MCF 10A (cell line): ENCODE measurements at regions of chr12 and their contacts with region 1.

Region 1: DNA sequence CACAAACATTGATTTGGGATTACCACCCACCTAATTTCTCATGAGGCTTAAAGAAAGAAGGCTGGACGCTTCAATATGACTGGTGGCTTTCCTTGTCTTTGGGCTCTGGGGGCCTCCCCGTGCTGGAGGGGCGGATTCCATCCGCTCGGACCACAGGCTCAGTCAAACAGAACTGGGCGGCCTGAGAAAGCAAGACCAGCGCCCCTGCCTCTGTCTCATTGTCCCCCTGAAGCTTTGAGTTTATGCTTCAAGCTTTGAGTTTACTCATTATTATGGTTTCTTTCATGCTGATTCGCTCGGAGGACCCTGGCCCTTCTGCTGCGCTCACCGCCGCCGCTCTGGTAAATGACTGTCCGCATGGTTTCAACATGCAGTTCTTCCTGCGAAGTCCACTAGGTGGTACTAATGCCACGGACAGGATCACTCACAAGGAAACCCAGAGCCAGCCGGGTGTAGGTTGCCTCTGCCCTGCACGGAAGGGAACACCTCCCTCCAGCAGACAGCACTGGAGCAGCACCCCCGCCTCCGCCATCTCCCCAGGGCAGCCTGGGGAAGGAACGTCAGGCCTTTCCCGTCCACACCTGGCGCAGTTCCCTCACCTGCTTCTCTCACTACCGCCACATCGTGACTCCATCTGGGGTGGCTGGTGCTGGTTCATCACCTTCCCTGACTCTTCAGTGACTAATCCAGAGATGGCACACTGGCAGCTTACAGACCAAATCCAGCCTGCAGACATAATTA is 13.2 kb upstream of the TIGAR start:
- DNase-seq: peak; percentile 88
- H3K4me3 Mint-ChIP-seq: peak overlapping the region; percentile 60
- H3K27ac Mint-ChIP-seq: peak overlapping the region; percentile 36
- H3K4me1 Mint-ChIP-seq: peaks cover 10% of the 10 kb centered on the region
- H3K27me3 Mint-ChIP-seq: peaks cover 12% of the 10 kb centered on the region
- CTCF ChIP-seq: peak; percentile 78

Region 2: DNA sequence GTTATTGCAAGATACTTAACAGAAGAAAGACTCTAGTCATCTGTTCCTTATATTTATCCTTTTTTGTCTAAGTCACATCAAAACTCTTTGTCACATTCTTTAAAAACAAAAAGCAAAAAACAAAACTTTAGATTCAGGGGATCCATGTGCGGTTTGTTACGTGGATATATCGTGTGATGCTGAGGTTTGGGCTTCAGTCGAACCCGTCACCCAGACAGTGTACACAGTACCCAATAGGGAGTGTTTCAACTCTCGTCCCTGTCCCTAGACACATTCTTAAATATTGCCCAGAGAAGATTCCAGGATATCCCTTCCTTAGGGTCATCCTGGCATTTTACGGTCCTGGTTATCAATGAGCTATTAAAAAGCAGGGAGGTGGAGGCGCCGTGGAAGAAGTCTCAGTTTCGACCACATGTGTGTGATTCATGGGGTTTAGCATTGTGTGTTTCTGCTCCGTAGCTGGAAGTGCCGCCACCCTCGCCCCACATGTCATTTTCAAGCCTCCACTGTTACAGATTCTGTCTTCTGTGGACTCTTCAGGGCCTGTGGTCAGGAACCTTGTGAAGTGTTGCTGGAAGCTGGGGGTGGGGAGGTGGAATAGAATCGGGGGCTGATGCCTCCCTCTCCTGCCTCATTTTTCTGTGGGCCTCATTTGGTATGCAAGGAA is 14.3 kb before region 1 on chr12:
- CTCF ChIA-PET with region 1: interaction called, 11 read pairs
- POLR2A ChIA-PET with region 1: interaction called, 3 read pairs
- intact Hi-C with region 1: no loop called
- DNase-seq: no peak
- H3K4me3 Mint-ChIP-seq: no peak overlapping the region
- H3K27ac Mint-ChIP-seq: no peak overlapping the region
- H3K4me1 Mint-ChIP-seq: no peaks in the 10 kb centered on the region
- H3K27me3 Mint-ChIP-seq: no peaks in the 10 kb centered on the region
- CTCF ChIP-seq: no peak

Region 3: GRCh38 chr12:4320853-4321701 is 13.3 kb after region 1 on chr12 and contains the start of gene TIGAR:
- CTCF ChIA-PET with region 1: interaction called, 24 read pairs
- POLR2A ChIA-PET with region 1: interaction called, 4 read pairs
- intact Hi-C with region 1: no loop called
- DNase-seq: peak; percentile 94
- H3K4me3 Mint-ChIP-seq: peak within 1 kb of the TSS; percentile 98
- H3K27ac Mint-ChIP-seq: peak within 1 kb of the TSS; percentile 84
- H3K4me1 Mint-ChIP-seq: peaks cover 19% of the 10 kb centered on the region
- H3K27me3 Mint-ChIP-seq: no peaks in the 10 kb centered on the region
- CTCF ChIP-seq: no peak
- total RNA-seq, gene TIGAR: 44.0 and 45.8 TPM in 2 replicates

Region 4: GRCh38 chr12:4526923-4527546 is 219.3 kb after region 1 on chr12:
- CTCF ChIA-PET with region 1: interaction called, 6 read pairs
- POLR2A ChIA-PET with region 1: no interaction called
- intact Hi-C with region 1: loop called (anchors 2 kb)
- DNase-seq: peak; percentile 16
- H3K4me3 Mint-ChIP-seq: no peak overlapping the region
- H3K27ac Mint-ChIP-seq: no peak overlapping the region
- H3K4me1 Mint-ChIP-seq: no peaks in the 10 kb centered on the region
- H3K27me3 Mint-ChIP-seq: no peaks in the 10 kb centered on the region
- CTCF ChIP-seq: peak; percentile 31